Activated CD4-positive, alpha-beta T cell treated with anti-CD3 and anti-CD28 coated beads, Interleukin-2, amount 10 ng/mL, durations not matched to agents 24 days and 14 days (primary cell): ENCODE measurements at regions of chr20 and their contacts with region 1.

Region 1: GRCh38 chr20:13430346-13431002 is 208.3 kb downstream of the TASP1 start:
- DNase-seq: peak; percentile 74
- H3K4me3 Mint-ChIP-seq: peak overlapping the region; percentile 36
- H3K27ac Mint-ChIP-seq: peak overlapping the region; percentile 91
- H3K4me1 Mint-ChIP-seq: peaks cover 23% of the 10 kb centered on the region
- H3K27me3 Mint-ChIP-seq: no peaks in the 10 kb centered on the region

Region 2: DNA sequence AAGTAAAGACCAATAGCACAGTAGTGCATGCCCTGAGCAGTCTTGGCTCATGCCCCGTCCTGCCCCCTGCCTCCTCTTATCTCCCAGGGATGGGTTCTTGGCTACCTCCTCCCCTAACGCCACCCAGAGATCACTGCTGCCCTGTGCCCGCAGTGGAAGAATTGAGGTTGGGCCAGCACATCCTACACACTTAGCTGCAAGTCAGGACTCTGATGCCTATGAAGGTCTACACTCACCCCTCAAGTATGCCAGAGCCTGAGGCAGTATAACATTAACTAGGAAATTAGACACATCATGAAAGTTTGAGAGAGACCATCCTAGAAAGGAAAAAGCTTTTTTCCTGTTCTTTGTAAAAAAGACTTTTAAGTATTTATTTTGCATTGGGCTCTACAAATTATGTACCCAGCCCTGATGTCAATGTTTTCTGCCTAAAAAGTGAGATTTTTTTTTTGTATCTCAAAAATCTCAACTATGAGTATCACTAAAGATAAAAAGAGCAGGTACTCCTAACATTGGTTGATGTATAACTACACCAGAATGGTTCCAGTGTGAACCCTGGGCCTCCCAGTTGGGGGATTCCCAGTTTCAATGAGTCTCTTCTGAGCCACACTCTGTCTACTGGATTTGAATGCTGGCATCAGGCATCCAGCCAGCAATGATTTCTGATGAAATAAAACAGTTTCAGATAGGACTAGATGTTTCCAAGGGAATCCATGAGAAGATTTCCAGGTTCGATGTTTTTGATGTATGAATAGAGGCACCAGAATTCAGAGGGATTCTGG is 94.0 kb before region 1 on chr20:
- intact Hi-C with region 1: loop called (anchors 1 kb)
- DNase-seq: no peak
- H3K4me3 Mint-ChIP-seq: no peak overlapping the region
- H3K27ac Mint-ChIP-seq: peak overlapping the region; percentile 75
- H3K4me1 Mint-ChIP-seq: peaks cover 29% of the 10 kb centered on the region
- H3K27me3 Mint-ChIP-seq: no peaks in the 10 kb centered on the region

Region 3: GRCh38 chr20:13384132-13384531 is 46.3 kb before region 1 on chr20:
- intact Hi-C with region 1: loop called (anchors 5 kb)
- DNase-seq: no peak
- H3K4me3 Mint-ChIP-seq: no peak overlapping the region
- H3K27ac Mint-ChIP-seq: no peak overlapping the region
- H3K4me1 Mint-ChIP-seq: no peaks in the 10 kb centered on the region
- H3K27me3 Mint-ChIP-seq: no peaks in the 10 kb centered on the region

Region 4: DNA sequence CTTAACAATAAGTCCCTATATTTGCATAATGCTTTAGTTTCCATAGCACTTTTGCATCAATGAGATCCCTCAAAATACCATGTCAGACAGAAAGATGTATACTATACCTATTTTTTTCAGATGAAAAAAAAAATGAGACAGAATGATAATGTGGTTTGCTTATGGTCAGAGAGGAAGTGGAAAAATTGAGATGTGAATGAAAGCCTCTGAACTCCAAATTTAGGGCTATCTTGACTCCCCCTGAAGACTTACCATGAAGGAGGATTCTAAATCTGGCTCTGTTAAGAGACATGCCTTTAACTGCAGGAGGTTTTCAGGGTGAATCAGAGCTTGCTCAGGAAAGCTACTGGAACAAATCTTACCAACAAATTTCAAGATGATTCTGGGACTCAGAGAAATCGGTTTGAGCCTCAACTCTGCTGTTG is 33.2 kb before region 1 on chr20:
- intact Hi-C with region 1: loop called (anchors 2 kb)
- DNase-seq: no peak
- H3K4me3 Mint-ChIP-seq: no peak overlapping the region
- H3K27ac Mint-ChIP-seq: peak overlapping the region; percentile 27
- H3K4me1 Mint-ChIP-seq: peaks cover 5% of the 10 kb centered on the region
- H3K27me3 Mint-ChIP-seq: no peaks in the 10 kb centered on the region